Endothelial cell of umbilical vein (primary cell): ENCODE measurements at regions of chr4 and their contacts with region 1.

Region 1: DNA sequence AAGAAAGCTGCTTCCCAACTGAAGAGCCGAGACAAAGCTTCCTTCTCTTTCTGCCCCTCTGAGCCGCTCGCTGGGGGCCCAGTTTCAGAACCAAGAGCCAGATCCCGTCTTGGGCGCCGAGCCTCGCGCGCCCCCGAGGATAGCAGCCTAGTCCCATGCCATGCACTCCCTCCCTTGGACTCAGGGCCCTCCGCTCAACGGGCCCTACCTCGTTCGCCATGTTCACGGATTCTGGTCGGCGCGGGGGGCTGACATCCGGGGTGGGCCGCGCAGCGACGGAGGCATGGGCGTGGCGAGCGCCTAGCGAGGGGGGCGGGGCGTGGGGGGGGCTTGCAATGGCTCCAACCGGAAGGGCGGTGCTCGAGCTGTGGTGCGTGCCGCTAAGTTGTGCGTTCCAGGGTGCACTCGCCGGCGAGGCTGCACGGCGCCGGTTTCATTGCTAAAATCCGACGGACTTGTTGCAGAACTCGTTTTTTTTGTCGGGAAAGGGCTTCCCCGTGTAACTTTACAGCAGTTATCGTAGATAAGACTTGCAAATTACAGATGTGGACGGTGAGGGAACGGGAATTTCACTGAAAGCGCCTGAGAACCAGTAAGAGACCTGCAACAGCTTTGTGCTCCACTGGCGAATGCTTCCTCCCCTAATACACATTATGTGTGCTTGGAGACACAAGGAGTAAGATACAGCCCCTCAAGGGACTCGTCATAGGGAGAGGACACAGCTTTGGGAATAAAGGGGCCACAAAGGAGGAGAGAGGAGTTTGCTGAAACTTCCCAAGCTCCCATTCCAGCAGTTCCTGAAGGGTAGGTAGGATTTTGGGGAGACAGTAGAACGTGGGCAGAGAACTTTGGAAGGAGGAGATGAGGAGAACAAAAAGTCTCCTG is at the start of gene ADH5:
- DNase-seq: peak; percentile 72
- H3K4me3 ChIP-seq: peak within 1 kb of the TSS; percentile 80 to 98 (median 82)
- H3K27ac ChIP-seq: peak within 1 kb of the TSS; percentile 66
- H3K4me1 ChIP-seq: peaks cover 8% of the 10 kb centered on the region
- H3K27me3 ChIP-seq: no peaks in the 10 kb centered on the region
- CTCF ChIP-seq: no peak
- POLR2A ChIP-seq: peak; percentile 91
- total RNA-seq, gene ADH5: 101 and 103 TPM in 2 replicates

Region 2: DNA sequence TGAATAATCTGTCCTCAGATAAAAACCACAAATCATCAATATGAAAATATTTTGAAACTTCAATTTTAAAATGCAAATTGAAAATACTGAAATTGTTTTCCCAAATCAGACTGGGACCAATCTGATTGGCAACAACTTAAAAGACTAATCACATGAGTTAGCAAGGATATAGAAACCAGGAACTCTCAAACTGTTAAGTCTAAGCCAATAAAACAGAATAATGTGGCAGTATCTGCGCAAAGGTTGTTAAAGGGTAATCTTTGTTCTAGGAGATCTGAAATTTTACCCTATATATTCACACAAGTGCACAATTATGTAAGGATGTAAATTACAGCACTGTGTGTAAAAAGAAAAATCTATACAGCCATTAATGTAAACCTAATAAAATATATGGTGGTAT is 189.4 kb before region 1 on chr4:
- CTCF ChIA-PET with region 1: no interaction called
- POLR2A ChIA-PET with region 1: no interaction called
- dilution Hi-C with region 1: no loop called
- intact Hi-C with region 1: no loop called
- DNase-seq: no peak
- H3K4me3 ChIP-seq: no peak overlapping the region
- H3K27ac ChIP-seq: no peak overlapping the region
- H3K4me1 ChIP-seq: no peaks in the 10 kb centered on the region
- H3K27me3 ChIP-seq: no peaks in the 10 kb centered on the region
- CTCF ChIP-seq: no peak
- POLR2A ChIP-seq: no peak

Region 3: DNA sequence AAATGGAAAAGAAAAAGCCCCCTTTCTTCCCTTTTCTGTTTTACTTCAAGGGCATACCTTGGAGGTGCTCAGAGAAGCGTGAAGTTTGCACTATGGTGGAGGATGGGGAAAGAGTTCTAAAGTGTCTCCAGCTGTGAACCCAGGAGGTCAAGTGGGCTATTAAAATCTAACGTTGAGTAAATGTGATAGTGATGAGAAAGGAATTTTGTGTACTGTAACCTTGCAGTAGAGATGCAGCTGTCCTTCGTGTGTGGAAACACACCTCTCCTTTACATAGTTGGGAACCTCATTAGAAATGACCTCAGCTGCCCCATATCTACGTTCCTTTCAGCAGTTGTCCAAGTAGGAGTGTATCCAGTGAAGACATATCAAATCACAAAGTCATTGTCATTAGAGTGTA is 26.6 kb before region 1 on chr4:
- CTCF ChIA-PET with region 1: no interaction called
- POLR2A ChIA-PET with region 1: no interaction called
- dilution Hi-C with region 1: no loop called
- intact Hi-C with region 1: loop called (anchors 1 kb)
- DNase-seq: no peak
- H3K4me3 ChIP-seq: no peak overlapping the region
- H3K27ac ChIP-seq: no peak overlapping the region
- H3K4me1 ChIP-seq: peaks cover 18% of the 10 kb centered on the region
- H3K27me3 ChIP-seq: no peaks in the 10 kb centered on the region
- CTCF ChIP-seq: no peak
- POLR2A ChIP-seq: no peak